Breast epithelium (tissue), 4 donors: ENCODE measurements at regions of chr3 and their contacts with region 1.

Region 1: DNA sequence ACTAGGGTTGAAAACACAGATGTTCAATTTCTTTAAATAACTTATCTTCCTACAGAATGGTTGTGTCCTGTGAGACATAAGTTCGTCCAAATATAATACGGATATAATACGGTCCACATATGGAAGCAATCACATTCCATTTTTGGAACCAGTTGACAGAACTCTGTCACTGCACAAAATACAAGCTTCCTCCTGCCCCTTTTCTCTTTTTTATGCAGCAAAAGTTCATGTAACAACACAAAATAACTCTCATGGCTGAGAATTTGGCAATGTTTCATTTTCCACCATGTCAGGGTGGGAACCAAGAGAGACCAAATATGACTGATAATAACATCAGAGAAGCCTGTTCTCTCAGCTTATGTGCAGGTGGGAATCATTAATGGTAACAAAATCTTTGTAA is 158.1 kb upstream of the ZNF385D start:
- DNase-seq: no peak
- H3K4me3 ChIP-seq: no peak overlapping the region
- H3K27ac ChIP-seq: no peak overlapping the region
- H3K4me1 ChIP-seq: no peaks in the 10 kb centered on the region
- H3K27me3 ChIP-seq: no peaks in the 10 kb centered on the region
- CTCF ChIP-seq: no peak
- POLR2A ChIP-seq: no peak

Region 2: GRCh38 chr3:21879184-21879886 is 29.8 kb before region 1 on chr3:
- intact Hi-C with region 1: no loop called
- DNase-seq: no peak
- H3K4me3 ChIP-seq: no peak overlapping the region
- H3K27ac ChIP-seq: no peak overlapping the region
- H3K4me1 ChIP-seq: no peaks in the 10 kb centered on the region
- H3K27me3 ChIP-seq: no peaks in the 10 kb centered on the region
- CTCF ChIP-seq: no peak
- POLR2A ChIP-seq: no peak

Region 3: DNA sequence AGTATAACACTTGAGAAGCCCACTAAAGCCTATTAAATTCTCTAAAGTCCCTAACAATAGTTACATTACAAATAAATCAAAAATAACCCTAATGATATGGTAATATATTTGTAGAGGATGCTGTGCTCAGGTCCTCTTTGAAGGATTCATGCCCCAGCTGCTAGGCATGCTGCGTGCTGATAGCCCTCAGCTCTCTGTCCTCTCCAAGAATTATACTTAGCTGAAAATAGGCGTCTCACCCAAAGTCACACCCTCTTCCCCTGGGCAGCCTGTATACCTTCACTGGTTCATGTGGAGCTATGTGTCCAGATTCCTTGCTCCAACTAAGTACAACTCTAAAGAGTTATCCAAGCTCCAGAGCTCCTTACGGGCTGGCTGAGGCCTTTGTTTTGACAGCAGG is 154.4 kb after region 1 on chr3:
- intact Hi-C with region 1: loop called (anchors 5 kb)
- DNase-seq: no peak
- H3K4me3 ChIP-seq: no peak overlapping the region
- H3K27ac ChIP-seq: no peak overlapping the region
- H3K4me1 ChIP-seq: no peaks in the 10 kb centered on the region
- H3K27me3 ChIP-seq: no peaks in the 10 kb centered on the region
- CTCF ChIP-seq: no peak
- POLR2A ChIP-seq: no peak